GM12878 (cell line): ENCODE measurements at regions of chr10 and their contacts with region 1.

Region 1: GRCh38 chr10:94320285-94320914 is 42.3 kb downstream of the NOC3L start:
- DNase-seq: no peak
- ATAC-seq: peak; percentile 89
- H3K4me3 ChIP-seq: no peak overlapping the region
- H3K27ac ChIP-seq: no peak overlapping the region
- H3K4me1 ChIP-seq: no peaks in the 10 kb centered on the region
- H3K27me3 ChIP-seq: no peaks in the 10 kb centered on the region
- CTCF ChIP-seq: peak; percentile 69 to 80 (median 69)
- EP300 ChIP-seq: no peak
- POLR2A ChIP-seq: no peak
- RAD21 ChIP-seq: peak; percentile 65

Region 2: GRCh38 chr10:93916257-93917063 is 403.9 kb before region 1 on chr10:
- CTCF ChIA-PET with region 1: interaction called, 23 read pairs
- POLR2A ChIA-PET with region 1: no interaction called
- RAD21 ChIA-PET with region 1: interaction called, 13 read pairs
- SMC1A ChIA-PET with region 1: interaction called, 12 read pairs
- in situ Hi-C with region 1: loop called (anchors 10 kb)
- intact Hi-C with region 1: loop called (anchors 2 kb)
- DNase-seq: no peak
- ATAC-seq: peak; percentile 41; the same call in 2 of the 3 replicates
- H3K4me3 ChIP-seq: no peak overlapping the region
- H3K27ac ChIP-seq: no peak overlapping the region
- H3K4me1 ChIP-seq: no peaks in the 10 kb centered on the region
- H3K27me3 ChIP-seq: no peaks in the 10 kb centered on the region
- CTCF ChIP-seq: peak; percentile 33 to 41 (median 41); a peak in 5 of 6 replicates
- EP300 ChIP-seq: no peak
- POLR2A ChIP-seq: no peak
- RAD21 ChIP-seq: peak; percentile 46

Region 3: DNA sequence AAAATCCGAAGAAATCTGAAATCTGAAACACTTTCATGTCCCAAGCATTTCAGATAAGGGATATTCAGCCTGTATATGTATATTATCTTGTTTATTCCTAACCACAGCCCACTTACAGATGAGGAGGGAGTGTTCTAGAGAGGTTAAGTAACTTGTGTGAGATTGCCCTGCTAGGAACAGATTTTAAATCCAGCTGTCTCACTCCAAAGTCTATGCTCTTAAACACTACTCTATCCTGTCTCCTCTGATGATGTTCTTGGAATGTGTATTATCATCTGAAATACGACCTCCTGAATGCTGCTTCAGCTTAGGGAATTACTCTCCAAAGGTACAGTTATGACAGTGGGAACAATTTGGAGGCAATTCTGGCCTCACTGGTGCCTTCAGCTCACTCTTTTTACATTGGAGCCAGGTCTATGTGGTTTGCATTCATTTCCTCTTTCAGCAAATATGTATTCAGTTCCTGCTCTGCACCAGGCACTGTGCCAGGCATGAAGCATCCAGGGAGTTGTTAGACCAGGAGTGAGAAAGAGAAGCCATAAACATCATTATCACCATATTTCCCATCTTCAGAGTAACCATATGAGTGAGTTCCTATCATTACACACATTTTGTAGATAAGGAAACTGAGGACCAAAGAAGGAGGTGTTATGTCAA is 27.8 kb before region 1 on chr10:
- CTCF ChIA-PET with region 1: interaction called, 10 read pairs
- POLR2A ChIA-PET with region 1: interaction called, 9 read pairs
- RAD21 ChIA-PET with region 1: no interaction called
- SMC1A ChIA-PET with region 1: interaction called, 3 read pairs
- in situ Hi-C with region 1: no loop called
- intact Hi-C with region 1: no loop called
- DNase-seq: no peak
- ATAC-seq: no peak
- H3K4me3 ChIP-seq: no peak overlapping the region
- H3K27ac ChIP-seq: no peak overlapping the region
- H3K4me1 ChIP-seq: no peaks in the 10 kb centered on the region
- H3K27me3 ChIP-seq: no peaks in the 10 kb centered on the region
- CTCF ChIP-seq: no peak
- EP300 ChIP-seq: no peak
- POLR2A ChIP-seq: no peak
- RAD21 ChIP-seq: no peak

Region 4: DNA sequence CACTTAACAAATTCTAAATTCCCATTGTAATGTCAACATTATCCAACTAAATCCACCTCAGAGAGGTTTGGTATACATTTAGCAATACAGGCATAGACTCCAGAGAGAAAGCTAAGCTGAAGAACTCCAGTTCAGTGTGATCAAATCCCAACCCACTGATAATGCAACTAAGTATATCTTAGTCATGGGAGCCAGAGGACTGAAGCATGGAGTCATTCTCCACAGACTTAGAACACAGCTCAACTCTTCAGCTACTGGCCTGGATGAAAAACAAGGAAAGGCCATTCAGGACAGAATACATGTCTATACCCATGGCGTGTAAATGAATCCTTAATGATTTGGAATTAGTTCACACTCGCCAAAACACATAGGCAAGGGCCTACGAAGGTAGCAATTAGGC is 14.5 kb after region 1 on chr10:
- CTCF ChIA-PET with region 1: interaction called, 81 read pairs
- POLR2A ChIA-PET with region 1: no interaction called
- RAD21 ChIA-PET with region 1: interaction called, 4 read pairs
- SMC1A ChIA-PET with region 1: interaction called, 6 read pairs
- in situ Hi-C with region 1: no loop called
- intact Hi-C with region 1: no loop called
- DNase-seq: no peak
- ATAC-seq: no peak
- H3K4me3 ChIP-seq: no peak overlapping the region
- H3K27ac ChIP-seq: no peak overlapping the region
- H3K4me1 ChIP-seq: no peaks in the 10 kb centered on the region
- H3K27me3 ChIP-seq: no peaks in the 10 kb centered on the region
- CTCF ChIP-seq: no peak
- EP300 ChIP-seq: no peak
- POLR2A ChIP-seq: no peak
- RAD21 ChIP-seq: no peak

Region 5: DNA sequence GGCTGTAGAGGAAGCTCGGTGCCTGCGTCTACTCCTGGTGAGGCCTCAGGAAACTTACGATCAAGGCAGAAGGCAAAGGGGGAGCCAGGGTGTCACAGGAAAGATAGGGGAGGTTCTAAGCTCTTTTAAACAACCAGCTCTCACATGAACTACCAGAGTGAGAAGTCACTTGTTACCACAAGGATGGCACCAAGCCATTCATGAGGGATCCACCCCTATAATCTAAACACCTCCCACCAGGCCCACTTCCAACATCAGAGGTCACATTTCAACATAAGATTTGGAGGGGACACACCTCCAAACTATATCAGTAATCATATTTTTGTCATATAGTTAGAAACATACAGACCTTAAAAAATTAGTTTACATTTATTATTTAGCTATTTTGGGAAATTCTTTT is 32.9 kb after region 1 on chr10:
- CTCF ChIA-PET with region 1: interaction called, 23 read pairs
- POLR2A ChIA-PET with region 1: no interaction called
- RAD21 ChIA-PET with region 1: no interaction called
- SMC1A ChIA-PET with region 1: interaction called, 4 read pairs
- in situ Hi-C with region 1: no loop called
- intact Hi-C with region 1: no loop called
- DNase-seq: no peak
- ATAC-seq: no peak
- H3K4me3 ChIP-seq: no peak overlapping the region
- H3K27ac ChIP-seq: no peak overlapping the region
- H3K4me1 ChIP-seq: no peaks in the 10 kb centered on the region; the same call in 1 of the 2 replicates
- H3K27me3 ChIP-seq: no peaks in the 10 kb centered on the region
- CTCF ChIP-seq: no peak
- EP300 ChIP-seq: no peak
- POLR2A ChIP-seq: no peak
- RAD21 ChIP-seq: no peak

Region 6: GRCh38 chr10:94412449-94412848 is 92.0 kb after region 1 on chr10:
- CTCF ChIA-PET with region 1: interaction called, 11 read pairs
- POLR2A ChIA-PET with region 1: no interaction called
- RAD21 ChIA-PET with region 1: no interaction called
- SMC1A ChIA-PET with region 1: no interaction called
- in situ Hi-C with region 1: no loop called
- intact Hi-C with region 1: no loop called
- DNase-seq: no peak
- ATAC-seq: no peak
- H3K4me3 ChIP-seq: no peak overlapping the region
- H3K27ac ChIP-seq: no peak overlapping the region
- H3K4me1 ChIP-seq: no peaks in the 10 kb centered on the region
- H3K27me3 ChIP-seq: no peaks in the 10 kb centered on the region
- CTCF ChIP-seq: no peak
- EP300 ChIP-seq: no peak
- POLR2A ChIP-seq: no peak
- RAD21 ChIP-seq: no peak

Region 7: GRCh38 chr10:94487575-94487974 is 167.2 kb after region 1 on chr10:
- CTCF ChIA-PET with region 1: no interaction called
- POLR2A ChIA-PET with region 1: no interaction called
- RAD21 ChIA-PET with region 1: no interaction called
- SMC1A ChIA-PET with region 1: no interaction called
- in situ Hi-C with region 1: no loop called
- intact Hi-C with region 1: no loop called
- DNase-seq: no peak
- ATAC-seq: no peak
- H3K4me3 ChIP-seq: no peak overlapping the region
- H3K27ac ChIP-seq: no peak overlapping the region
- H3K4me1 ChIP-seq: no peaks in the 10 kb centered on the region
- H3K27me3 ChIP-seq: no peaks in the 10 kb centered on the region
- CTCF ChIP-seq: no peak
- EP300 ChIP-seq: no peak
- POLR2A ChIP-seq: no peak
- RAD21 ChIP-seq: no peak